ENCODE measurements at regions of chr14 and their contacts with region 1.

Region 1: GRCh38 chr14:72665259-72665658 is 228.6 kb downstream of the DPF3 start:
- DNase-seq: peak; percentile 36
- H3K4me3 Mint-ChIP-seq: peak overlapping the region; percentile 42
- H3K27ac Mint-ChIP-seq: peak overlapping the region; percentile 77
- H3K4me1 Mint-ChIP-seq: peaks cover 33% of the 10 kb centered on the region
- H3K27me3 Mint-ChIP-seq: no peaks in the 10 kb centered on the region
- CTCF ChIP-seq: no peak

Region 2: GRCh38 chr14:72523424-72524294 is 141.6 kb before region 1 on chr14:
- CTCF ChIA-PET with region 1: no interaction called
- intact Hi-C with region 1: loop called (anchors 10 kb)
- DNase-seq: no peak
- H3K4me3 Mint-ChIP-seq: no peak overlapping the region
- H3K27ac Mint-ChIP-seq: no peak overlapping the region
- H3K4me1 Mint-ChIP-seq: peaks cover 9% of the 10 kb centered on the region
- H3K27me3 Mint-ChIP-seq: no peaks in the 10 kb centered on the region
- CTCF ChIP-seq: no peak

Region 3: GRCh38 chr14:72708708-72709476 is 43.6 kb after region 1 on chr14:
- CTCF ChIA-PET with region 1: no interaction called
- intact Hi-C with region 1: loop called (anchors 1 kb)
- DNase-seq: peak; percentile 64
- H3K4me3 Mint-ChIP-seq: no peak overlapping the region
- H3K27ac Mint-ChIP-seq: no peak overlapping the region
- H3K4me1 Mint-ChIP-seq: peaks cover 15% of the 10 kb centered on the region
- H3K27me3 Mint-ChIP-seq: no peaks in the 10 kb centered on the region
- CTCF ChIP-seq: no peak

Region 4: GRCh38 chr14:72726444-72726843 is 61.2 kb after region 1 on chr14:
- CTCF ChIA-PET with region 1: no interaction called
- intact Hi-C with region 1: no loop called
- DNase-seq: no peak
- H3K4me3 Mint-ChIP-seq: no peak overlapping the region
- H3K27ac Mint-ChIP-seq: no peak overlapping the region
- H3K4me1 Mint-ChIP-seq: no peaks in the 10 kb centered on the region
- H3K27me3 Mint-ChIP-seq: no peaks in the 10 kb centered on the region
- CTCF ChIP-seq: no peak

Region 5: DNA sequence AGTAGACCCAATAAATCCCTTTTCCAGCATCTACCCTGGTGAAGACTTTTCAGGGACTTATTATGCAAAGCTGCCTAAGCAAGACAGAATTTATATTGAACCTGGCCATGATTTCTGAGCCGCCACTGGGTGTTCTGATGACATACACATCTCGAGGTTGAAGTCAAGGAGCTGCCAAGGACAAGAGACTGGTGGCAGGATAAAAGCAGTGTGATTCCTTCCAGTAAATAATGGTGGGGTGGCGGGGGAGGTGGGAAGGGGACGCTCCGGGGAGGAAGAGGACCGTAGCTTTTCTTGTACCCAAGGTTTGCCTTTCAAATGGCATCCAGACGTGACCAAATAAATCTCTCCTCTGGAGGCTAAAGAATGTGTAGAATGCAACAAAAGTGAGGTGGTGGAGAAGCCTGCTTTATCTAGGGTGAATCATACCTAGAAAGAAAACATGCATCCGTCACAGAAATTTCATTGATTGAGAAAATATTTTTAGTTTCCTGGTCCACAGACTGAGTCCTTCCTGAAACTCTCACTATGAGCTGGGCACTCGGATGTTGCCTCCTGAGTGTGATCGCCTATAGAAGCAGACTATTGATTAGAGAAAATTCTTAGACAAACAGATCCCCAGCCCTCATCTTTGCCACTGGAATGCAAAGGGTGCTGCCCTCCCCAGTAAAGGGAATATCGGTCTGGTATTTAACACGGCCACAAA is 116.4 kb after region 1 on chr14:
- CTCF ChIA-PET with region 1: no interaction called
- intact Hi-C with region 1: loop called (anchors 10 kb)
- DNase-seq: peak; percentile 75
- H3K4me3 Mint-ChIP-seq: no peak overlapping the region
- H3K27ac Mint-ChIP-seq: peak overlapping the region; percentile 49
- H3K4me1 Mint-ChIP-seq: peaks cover 54% of the 10 kb centered on the region
- H3K27me3 Mint-ChIP-seq: no peaks in the 10 kb centered on the region
- CTCF ChIP-seq: no peak